Stomach (tissue), 19 donors: ENCODE measurements at regions of chr22 and their contacts with region 1.

Region 1: DNA sequence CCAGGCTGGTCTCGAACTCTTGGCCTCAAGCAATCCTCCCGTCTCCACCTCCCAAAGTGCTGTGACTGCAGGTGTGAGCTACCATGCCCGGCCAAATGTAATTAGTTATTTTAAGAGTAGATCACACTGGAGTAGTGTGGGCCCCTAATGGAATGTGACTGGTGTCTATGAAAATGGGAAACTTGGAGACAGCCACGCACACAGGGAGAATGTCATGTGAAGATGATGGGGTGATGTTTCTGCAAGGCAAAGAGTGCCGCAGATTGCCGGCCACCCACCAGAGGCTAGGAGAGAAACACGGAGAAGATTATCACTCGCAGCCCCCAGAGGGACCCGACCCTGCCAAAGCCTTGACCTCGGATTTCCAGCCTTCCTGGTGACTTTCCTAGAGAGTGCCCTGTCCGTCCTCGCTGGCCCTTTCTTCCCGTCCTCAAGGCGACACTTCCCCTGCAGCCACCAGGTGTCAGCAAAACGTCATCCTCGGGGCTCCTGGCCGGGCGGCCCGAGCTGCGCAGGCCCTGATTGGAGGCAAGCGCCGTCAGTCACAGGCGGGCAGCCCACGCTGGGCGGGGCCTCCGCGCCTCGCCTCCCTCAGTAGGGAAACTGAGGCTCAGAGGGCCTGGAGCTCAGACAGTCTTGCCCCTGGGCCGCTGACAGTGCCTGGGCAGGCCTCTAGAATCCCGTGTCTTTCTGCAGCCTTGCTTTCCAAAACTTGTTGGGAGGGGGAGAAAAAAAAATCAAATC is 16.3 kb downstream of the CRYBB2 start:
- DNase-seq: peak; percentile 85 to 94
- H3K4me3 ChIP-seq: no peak overlapping the region
- H3K27ac ChIP-seq: no peak overlapping the region
- H3K4me1 ChIP-seq: peaks cover 0 to 6% (median 6%) of the 10 kb centered on the region in 4 donors
- H3K27me3 ChIP-seq: peaks cover 0 to 69% (median 32%) of the 10 kb centered on the region in 3 donors
- CTCF ChIP-seq: peak in 5 of 7 experiments; percentile 31 to 63 (median 58)
- EP300 ChIP-seq: no peak
- POLR2A ChIP-seq: no peak

Region 2: DNA sequence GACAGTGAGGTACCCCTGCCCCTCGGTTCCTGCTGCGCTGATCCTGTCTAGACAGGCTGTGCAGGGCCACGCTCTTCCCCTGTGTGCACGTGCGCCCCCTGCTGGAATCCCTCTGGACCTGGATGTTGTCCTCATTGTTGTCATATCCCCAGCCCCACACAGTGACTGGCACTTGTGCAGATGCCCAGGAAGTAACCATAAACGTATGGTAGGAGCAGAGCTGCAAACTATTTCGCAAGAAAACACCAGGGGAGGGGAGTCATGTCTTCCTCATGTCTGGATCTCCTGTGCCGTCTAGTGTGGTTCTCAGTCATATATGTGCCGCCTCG is 98.4 kb after region 1 on chr22:
- intact Hi-C with region 1: loop called (anchors 10 kb)
- DNase-seq: peak; percentile 59 to 72
- H3K4me3 ChIP-seq: no peak overlapping the region
- H3K27ac ChIP-seq: no peak overlapping the region
- H3K4me1 ChIP-seq: no peaks in the 10 kb centered on the region
- H3K27me3 ChIP-seq: no peaks in the 10 kb centered on the region
- CTCF ChIP-seq: peak in 1 of 7 experiments; percentile 33
- EP300 ChIP-seq: no peak
- POLR2A ChIP-seq: no peak